A673 (cell line): ENCODE measurements at regions of chr7 and their contacts with region 1.

Region 1: DNA sequence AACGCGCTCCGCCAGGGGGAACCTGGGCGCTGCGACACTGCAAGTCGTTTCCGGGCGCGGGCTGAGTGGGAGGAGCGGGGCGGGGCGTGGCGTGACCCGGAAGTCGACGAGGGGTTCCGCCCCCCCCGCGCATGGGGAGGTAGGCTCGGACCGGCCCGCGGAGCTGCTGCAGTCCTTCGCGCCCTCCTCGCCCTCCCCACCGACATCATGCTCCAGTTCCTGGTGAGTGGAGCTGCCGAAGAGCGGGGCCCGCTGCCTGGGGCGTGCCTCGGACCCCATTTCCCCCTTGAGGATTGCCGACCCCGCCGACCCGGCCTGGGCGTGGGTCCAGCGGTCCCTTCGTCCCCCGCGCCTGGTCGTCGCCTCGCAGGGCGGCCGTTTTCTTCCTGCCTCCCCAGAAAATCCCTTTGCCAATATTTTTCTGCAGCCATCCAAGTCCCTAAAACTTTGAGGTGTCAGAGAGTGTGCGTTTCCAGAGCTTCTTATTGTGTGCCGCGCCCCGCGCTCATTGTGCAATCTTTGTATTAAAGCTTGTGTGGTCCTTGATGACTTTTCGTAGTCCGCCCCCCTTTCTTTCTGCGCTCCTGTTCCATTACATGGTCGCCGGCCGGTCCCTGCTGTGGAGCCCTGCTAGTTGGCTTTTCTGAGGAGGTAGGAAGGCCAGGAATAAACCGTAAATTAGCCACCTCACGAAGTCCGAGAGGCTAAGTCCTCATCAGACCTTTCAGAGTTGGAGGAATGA is at the start of gene STMP1:
- DNase-seq: peak; percentile 96
- H3K4me3 ChIP-seq: peak within 1 kb of the TSS; percentile 84
- H3K27ac ChIP-seq: peak within 1 kb of the TSS; percentile 82
- H3K4me1 ChIP-seq: peaks cover 13% of the 10 kb centered on the region
- H3K27me3 ChIP-seq: no peaks in the 10 kb centered on the region
- CTCF ChIP-seq: peak; percentile 69
- total RNA-seq, gene STMP1: 32.1 and 33.4 TPM in 2 replicates

Region 2: GRCh38 chr7:135509903-135510602 is 152.5 kb before region 1 on chr7 and contains the start of gene CNOT4:
- CTCF ChIA-PET with region 1: interaction called, 6 read pairs
- POLR2A ChIA-PET with region 1: no interaction called
- intact Hi-C with region 1: loop called (anchors 5 kb)
- DNase-seq: peak; percentile 99
- H3K4me3 ChIP-seq: peak within 1 kb of the TSS; percentile 82
- H3K27ac ChIP-seq: peak within 1 kb of the TSS; percentile 95
- H3K4me1 ChIP-seq: peaks cover 13% of the 10 kb centered on the region
- H3K27me3 ChIP-seq: no peaks in the 10 kb centered on the region
- CTCF ChIP-seq: no peak
- total RNA-seq, gene CNOT4: 24.1 and 24.6 TPM in 2 replicates